ENCODE measurements at regions of chr19 and their contacts with region 1.

Region 1: DNA sequence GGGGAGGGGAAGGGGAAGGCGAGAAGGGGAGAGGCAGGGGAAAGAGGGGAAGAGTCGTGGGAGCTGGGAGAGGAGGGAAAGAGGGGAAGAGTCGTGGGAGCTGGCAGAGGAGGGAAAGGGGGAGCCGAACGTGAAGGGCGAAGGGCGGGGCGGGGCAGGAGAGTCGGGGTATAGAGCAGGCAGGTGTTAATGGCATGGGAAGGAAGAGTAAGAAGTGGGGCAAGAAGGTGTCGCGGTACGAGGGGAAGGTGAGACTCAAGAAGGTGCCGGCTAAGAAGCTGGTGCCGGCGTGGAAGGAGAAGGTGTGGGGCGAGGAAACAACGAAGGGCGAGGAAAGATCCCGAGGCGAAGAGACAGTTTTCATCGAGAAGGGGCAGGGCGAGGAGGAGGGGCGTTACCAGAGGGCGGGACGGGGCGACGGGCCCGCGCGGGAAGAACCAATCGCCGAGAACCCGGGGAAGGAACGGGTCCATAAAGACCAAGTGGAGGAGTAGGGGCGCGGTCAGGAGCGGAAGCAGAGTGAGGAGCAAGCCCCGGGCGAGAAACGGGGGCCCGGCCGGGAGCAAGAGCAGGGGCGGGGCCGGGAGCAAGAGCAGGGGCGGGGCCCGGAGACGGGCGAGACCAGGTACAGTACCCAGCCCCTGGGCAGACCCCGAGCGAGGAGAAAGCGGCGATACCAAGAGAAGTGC is 463 bp downstream of the CATSPERG start:
- DNase-seq: peak; percentile 86 to 94 (median 93)
- ATAC-seq: peak; percentile 77
- H3K4me3 ChIP-seq: peak overlapping the region; percentile 92
- H3K4me3 Mint-ChIP-seq: peak overlapping the region; percentile 92 to 100 (median 96)
- H3K27ac ChIP-seq: peak overlapping the region; percentile 86
- H3K27ac Mint-ChIP-seq: peak overlapping the region; percentile 91 to 100 (median 97)
- H3K4me1 ChIP-seq: peaks cover 3 to 5% of the 10 kb centered on the region in 2 donors
- H3K4me1 Mint-ChIP-seq: peaks cover 16 to 28% (median 17%) of the 10 kb centered on the region in 7 donors
- H3K27me3 ChIP-seq: no peaks in the 10 kb centered on the region
- H3K27me3 Mint-ChIP-seq: no peaks in the 10 kb centered on the region

Region 2: DNA sequence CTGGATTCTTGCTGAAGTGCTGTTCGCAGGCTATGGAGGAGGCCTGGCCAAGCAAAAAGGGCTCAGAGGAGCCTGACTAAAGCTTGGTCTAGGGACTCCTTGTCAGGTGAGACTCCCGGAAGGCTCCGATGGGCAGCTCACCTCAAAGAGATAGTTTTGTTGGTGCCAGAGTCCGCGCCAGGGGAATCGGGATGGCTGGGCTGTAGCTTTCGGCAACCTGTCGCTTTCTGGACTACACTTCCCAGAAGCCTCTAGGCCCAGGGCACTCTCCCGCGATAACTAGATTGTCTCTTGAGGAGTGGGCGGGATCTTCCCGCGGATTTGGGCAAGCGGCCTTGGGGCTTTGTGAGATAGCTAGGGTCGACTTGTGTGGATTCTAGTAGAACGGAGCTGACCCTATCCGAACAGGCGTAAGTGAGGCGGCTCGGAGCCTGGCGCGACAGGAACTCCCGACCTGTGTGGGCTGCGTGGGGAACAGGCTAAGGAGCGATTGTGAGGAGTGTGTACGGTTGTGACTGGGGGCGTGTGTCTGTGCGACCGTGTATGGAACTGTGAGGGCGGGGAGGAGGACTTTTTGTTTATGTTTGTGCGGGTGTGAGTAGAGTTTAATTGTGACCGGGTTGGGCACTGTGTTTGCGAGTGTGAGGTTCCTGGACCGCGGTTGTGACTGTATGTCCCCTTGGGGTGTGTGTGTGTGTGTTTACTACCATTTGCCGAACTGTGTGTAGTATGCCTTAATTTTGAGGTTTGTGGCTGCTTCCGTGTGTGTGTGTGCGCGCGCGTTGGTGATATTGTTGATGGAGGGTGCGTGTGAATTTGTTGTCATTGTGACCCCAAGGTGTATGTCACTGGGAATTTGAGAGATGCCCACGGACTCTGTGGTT is 1485.3 kb before region 1 on chr19 and contains the start of gene ZNF345:
- CTCF ChIA-PET with region 1: no interaction called
- POLR2A ChIA-PET with region 1: no interaction called
- intact Hi-C with region 1: loop called in 1 of 2 experiments (anchors 10 kb)
- DNase-seq: peak; percentile 62 to 91 (median 88)
- ATAC-seq: peak; percentile 93
- H3K4me3 ChIP-seq: peak within 1 kb of the TSS; percentile 92
- H3K4me3 Mint-ChIP-seq: no peak within 1 kb of the TSS
- H3K27ac ChIP-seq: peak within 1 kb of the TSS; percentile 86
- H3K27ac Mint-ChIP-seq: no peak within 1 kb of the TSS
- H3K4me1 ChIP-seq: peaks cover 9 to 16% of the 10 kb centered on the region in 2 donors
- H3K4me1 Mint-ChIP-seq: peaks cover 0 to 22% (median 13%) of the 10 kb centered on the region in 7 donors
- H3K27me3 ChIP-seq: no peaks in the 10 kb centered on the region
- H3K27me3 Mint-ChIP-seq: no peaks in the 10 kb centered on the region
- total RNA-seq, gene ZNF345: 6.8 to 18.2 (median 7.8) TPM

Region 3: GRCh38 chr19:38142176-38143035 is 193.7 kb before region 1 on chr19:
- CTCF ChIA-PET with region 1: no interaction called
- POLR2A ChIA-PET with region 1: no interaction called
- intact Hi-C with region 1: loop called in 1 of 2 experiments (anchors 1 kb)
- DNase-seq: peak in 3 of 9 donors; percentile 13 to 46 (median 16)
- ATAC-seq: peak; percentile 56
- H3K4me3 ChIP-seq: no peak overlapping the region
- H3K4me3 Mint-ChIP-seq: no peak overlapping the region
- H3K27ac ChIP-seq: no peak overlapping the region
- H3K27ac Mint-ChIP-seq: peak overlapping the region in 1 of 9 donors; percentile 63
- H3K4me1 ChIP-seq: no peaks in the 10 kb centered on the region
- H3K4me1 Mint-ChIP-seq: peaks cover 0 to 7% (median 0%) of the 10 kb centered on the region in 7 donors
- H3K27me3 ChIP-seq: no peaks in the 10 kb centered on the region
- H3K27me3 Mint-ChIP-seq: no peaks in the 10 kb centered on the region

Region 4: DNA sequence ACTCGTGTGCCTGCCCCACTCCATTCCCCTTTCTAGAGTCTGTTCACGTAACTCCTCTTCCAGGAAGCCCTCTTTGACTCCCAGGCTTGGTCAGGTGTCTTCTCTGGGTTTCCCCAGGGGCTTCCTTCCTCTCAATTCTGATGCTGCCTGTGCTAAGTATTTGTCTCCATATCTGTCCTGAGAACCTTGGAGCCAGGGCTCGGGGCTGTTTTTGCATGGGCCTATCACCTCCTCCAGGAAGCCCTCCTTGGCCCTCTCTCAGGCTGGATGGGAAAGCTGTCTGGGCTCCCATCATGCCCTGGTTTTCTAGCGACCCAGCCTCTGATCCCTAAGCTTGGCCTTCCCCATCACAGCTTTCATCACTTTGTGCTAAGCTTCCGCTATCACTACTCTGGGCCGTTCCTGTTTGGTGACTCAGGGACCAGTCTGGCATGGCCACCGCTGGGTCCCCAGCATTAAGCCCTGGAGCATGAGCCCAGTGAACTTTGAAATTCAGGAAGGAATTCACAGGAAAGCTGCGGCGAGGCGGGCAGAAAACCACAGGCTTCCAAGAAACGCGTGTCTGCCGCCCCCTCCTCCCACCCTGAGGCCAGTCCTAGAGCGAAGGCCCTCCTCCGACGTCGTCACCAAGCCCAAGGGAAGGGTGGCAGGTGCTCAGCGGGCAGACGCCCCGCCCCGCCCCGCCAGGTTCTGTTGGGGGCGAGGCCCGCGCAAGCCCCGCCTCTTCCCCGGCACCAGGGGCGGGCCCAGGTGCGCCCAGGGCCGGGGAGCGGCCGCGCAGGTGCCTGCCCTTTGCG is 72.2 kb before region 1 on chr19:
- CTCF ChIA-PET with region 1: no interaction called
- POLR2A ChIA-PET with region 1: no interaction called
- intact Hi-C with region 1: loop called (anchors 1 kb)
- DNase-seq: peak; percentile 71 to 89 (median 80)
- ATAC-seq: peak; percentile 93
- H3K4me3 ChIP-seq: peak overlapping the region; percentile 77
- H3K4me3 Mint-ChIP-seq: peak overlapping the region; percentile 81 to 93 (median 88)
- H3K27ac ChIP-seq: peak overlapping the region; percentile 77
- H3K27ac Mint-ChIP-seq: peak overlapping the region in 8 of 9 donors; percentile 52 to 93 (median 70)
- H3K4me1 ChIP-seq: peaks cover 4 to 10% of the 10 kb centered on the region in 2 donors
- H3K4me1 Mint-ChIP-seq: peaks cover 17 to 44% (median 39%) of the 10 kb centered on the region in 7 donors
- H3K27me3 ChIP-seq: no peaks in the 10 kb centered on the region
- H3K27me3 Mint-ChIP-seq: peaks cover 0 to 5% (median 2%) of the 10 kb centered on the region in 5 donors

Region 5: GRCh38 chr19:38387550-38388348 is 51.7 kb after region 1 on chr19 and contains the start of gene GGN:
- CTCF ChIA-PET with region 1: interaction called, 3 read pairs
- POLR2A ChIA-PET with region 1: no interaction called
- intact Hi-C with region 1: loop called (anchors 1 kb)
- DNase-seq: peak; percentile 60 to 83 (median 72)
- ATAC-seq: peak; percentile 83
- H3K4me3 ChIP-seq: peak within 1 kb of the TSS; percentile 74
- H3K4me3 Mint-ChIP-seq: peak within 1 kb of the TSS; percentile 81 to 95 (median 91)
- H3K27ac ChIP-seq: no peak within 1 kb of the TSS
- H3K27ac Mint-ChIP-seq: peak within 1 kb of the TSS in 8 of 9 donors; percentile 43 to 95 (median 84)
- H3K4me1 ChIP-seq: peaks cover 13 to 34% of the 10 kb centered on the region in 2 donors
- H3K4me1 Mint-ChIP-seq: peaks cover 5 to 26% (median 21%) of the 10 kb centered on the region in 7 donors
- H3K27me3 ChIP-seq: no peaks in the 10 kb centered on the region
- H3K27me3 Mint-ChIP-seq: peaks cover 6 to 41% (median 30%) of the 10 kb centered on the region in 5 donors
- total RNA-seq, gene GGN: 0.29 to 0.60 (median 0.39) TPM in 3 of 5 experiments, not detected in the others

Region 6: DNA sequence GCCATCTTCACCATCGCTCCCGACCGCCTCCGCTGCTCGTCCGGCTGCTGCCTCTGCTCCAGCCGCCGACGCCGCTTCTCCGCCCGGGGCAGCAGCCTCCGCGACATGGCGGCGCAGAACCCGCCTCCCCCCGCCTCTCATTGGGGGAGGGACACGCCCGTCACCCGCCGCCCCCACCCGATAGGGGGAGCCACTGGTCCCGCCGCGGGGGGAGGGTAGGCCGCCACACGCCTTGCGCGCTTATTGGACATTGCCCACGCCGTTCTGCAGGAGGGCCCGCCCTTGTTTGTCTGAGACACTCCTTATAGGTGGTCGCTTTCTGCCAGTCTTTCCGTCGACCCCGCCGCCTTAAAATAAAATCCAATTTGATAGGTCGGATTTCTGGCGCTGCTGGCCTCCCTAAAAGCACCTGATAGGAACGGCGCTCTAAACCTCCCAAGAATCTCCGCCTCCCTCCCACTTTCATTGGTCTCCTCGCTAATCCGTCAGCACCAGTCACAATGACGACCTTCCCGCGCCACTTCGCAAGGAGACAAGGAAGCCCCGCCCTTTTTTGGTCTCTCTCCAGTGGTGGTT is 513.9 kb after region 1 on chr19 and contains the start of gene HNRNPL:
- CTCF ChIA-PET with region 1: no interaction called
- POLR2A ChIA-PET with region 1: no interaction called
- intact Hi-C with region 1: loop called in 1 of 2 experiments (anchors 2 kb)
- DNase-seq: peak; percentile 99 to 100 (median 100)
- ATAC-seq: peak; percentile 78
- H3K4me3 ChIP-seq: peak within 1 kb of the TSS; percentile 81
- H3K4me3 Mint-ChIP-seq: peak within 1 kb of the TSS; percentile 88 to 99 (median 96)
- H3K27ac ChIP-seq: peak within 1 kb of the TSS; percentile 96
- H3K27ac Mint-ChIP-seq: peak within 1 kb of the TSS; percentile 94 to 100 (median 99)
- H3K4me1 ChIP-seq: peaks cover 24 to 41% of the 10 kb centered on the region in 2 donors
- H3K4me1 Mint-ChIP-seq: peaks cover 30 to 67% (median 50%) of the 10 kb centered on the region in 7 donors
- H3K27me3 ChIP-seq: no peaks in the 10 kb centered on the region
- H3K27me3 Mint-ChIP-seq: peaks cover 0 to 5% (median 0%) of the 10 kb centered on the region in 5 donors
- total RNA-seq, gene HNRNPL: 339 to 539 (median 505) TPM

Measured in naive thymus-derived CD4-positive, alpha-beta T cell (primary cell).